PC-3 (cell line): ENCODE measurements at regions of chr9 and their contacts with region 1.

Region 1: GRCh38 chr9:89179895-89180667 is 1.5 kb upstream of the SHC3 start:
- DNase-seq: peak; percentile 93
- ATAC-seq: peak; percentile 89
- H3K4me3 ChIP-seq: peak overlapping the region; percentile 72
- H3K27ac ChIP-seq: peak overlapping the region; percentile 89
- H3K4me1 ChIP-seq: peaks cover 17% of the 10 kb centered on the region
- H3K27me3 ChIP-seq: no peaks in the 10 kb centered on the region
- CTCF ChIP-seq: no peak

Region 2: DNA sequence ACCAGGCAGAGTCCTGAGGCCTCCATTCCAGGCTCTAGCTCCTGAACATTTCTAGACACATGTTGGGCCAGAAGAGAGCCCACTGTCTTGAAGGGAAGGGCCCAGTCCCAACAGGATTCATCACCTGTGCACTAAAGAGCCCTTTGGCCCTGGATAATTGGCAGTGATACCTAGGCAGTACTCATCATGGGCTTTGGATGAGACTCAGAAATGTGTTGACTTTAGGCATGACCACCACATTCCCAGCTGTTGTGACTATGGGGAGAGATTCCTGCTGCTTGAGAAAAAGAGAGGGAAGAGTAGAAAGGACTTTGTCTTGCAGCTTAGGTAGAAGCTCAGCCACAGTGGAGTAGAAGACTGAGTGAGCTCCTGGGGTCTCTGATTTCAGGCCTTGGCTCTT is 1820.8 kb before region 1 on chr9:
- CTCF ChIA-PET with region 1: no interaction called
- POLR2A ChIA-PET with region 1: no interaction called
- intact Hi-C with region 1: no loop called
- DNase-seq: no peak
- ATAC-seq: no peak
- H3K4me3 ChIP-seq: no peak overlapping the region
- H3K27ac ChIP-seq: no peak overlapping the region
- H3K4me1 ChIP-seq: no peaks in the 10 kb centered on the region
- H3K27me3 ChIP-seq: no peaks in the 10 kb centered on the region
- CTCF ChIP-seq: no peak

Region 3: GRCh38 chr9:88973281-88974152 is 206.6 kb before region 1 on chr9:
- CTCF ChIA-PET with region 1: no interaction called
- POLR2A ChIA-PET with region 1: no interaction called
- intact Hi-C with region 1: no loop called
- DNase-seq: no peak
- ATAC-seq: no peak
- H3K4me3 ChIP-seq: no peak overlapping the region
- H3K27ac ChIP-seq: no peak overlapping the region
- H3K4me1 ChIP-seq: no peaks in the 10 kb centered on the region
- H3K27me3 ChIP-seq: no peaks in the 10 kb centered on the region
- CTCF ChIP-seq: no peak

Region 4: GRCh38 chr9:89154651-89155336 is 25.3 kb before region 1 on chr9:
- CTCF ChIA-PET with region 1: no interaction called
- POLR2A ChIA-PET with region 1: interaction called, 4 read pairs
- intact Hi-C with region 1: loop called (anchors 1 kb)
- DNase-seq: peak; percentile 85
- ATAC-seq: peak; percentile 82
- H3K4me3 ChIP-seq: peak overlapping the region; percentile 3; the same call in 1 of the 2 replicates
- H3K27ac ChIP-seq: peak overlapping the region; percentile 93
- H3K4me1 ChIP-seq: peaks cover 25% of the 10 kb centered on the region
- H3K27me3 ChIP-seq: no peaks in the 10 kb centered on the region
- CTCF ChIP-seq: no peak

Region 5: GRCh38 chr9:89194421-89195130 is 14.5 kb after region 1 on chr9:
- CTCF ChIA-PET with region 1: no interaction called
- POLR2A ChIA-PET with region 1: no interaction called
- intact Hi-C with region 1: no loop called
- DNase-seq: peak; percentile 32
- ATAC-seq: no peak; the same call in 1 of the 2 replicates
- H3K4me3 ChIP-seq: no peak overlapping the region
- H3K27ac ChIP-seq: peak overlapping the region; percentile 47
- H3K4me1 ChIP-seq: peaks cover 15% of the 10 kb centered on the region
- H3K27me3 ChIP-seq: no peaks in the 10 kb centered on the region
- CTCF ChIP-seq: no peak

Region 6: GRCh38 chr9:89340332-89340731 is 160.3 kb after region 1 on chr9:
- CTCF ChIA-PET with region 1: no interaction called
- POLR2A ChIA-PET with region 1: no interaction called
- intact Hi-C with region 1: no loop called
- DNase-seq: no peak
- ATAC-seq: no peak
- H3K4me3 ChIP-seq: no peak overlapping the region
- H3K27ac ChIP-seq: no peak overlapping the region
- H3K4me1 ChIP-seq: no peaks in the 10 kb centered on the region
- H3K27me3 ChIP-seq: no peaks in the 10 kb centered on the region
- CTCF ChIP-seq: no peak

Region 7: GRCh38 chr9:89437000-89437631 is 257.0 kb after region 1 on chr9:
- CTCF ChIA-PET with region 1: no interaction called
- POLR2A ChIA-PET with region 1: no interaction called
- intact Hi-C with region 1: loop called (anchors 10 kb)
- DNase-seq: no peak
- ATAC-seq: no peak
- H3K4me3 ChIP-seq: no peak overlapping the region
- H3K27ac ChIP-seq: no peak overlapping the region
- H3K4me1 ChIP-seq: peaks cover 13% of the 10 kb centered on the region
- H3K27me3 ChIP-seq: no peaks in the 10 kb centered on the region
- CTCF ChIP-seq: no peak